ENCODE measurements at regions of chr10 and their contacts with region 1.

Region 1: DNA sequence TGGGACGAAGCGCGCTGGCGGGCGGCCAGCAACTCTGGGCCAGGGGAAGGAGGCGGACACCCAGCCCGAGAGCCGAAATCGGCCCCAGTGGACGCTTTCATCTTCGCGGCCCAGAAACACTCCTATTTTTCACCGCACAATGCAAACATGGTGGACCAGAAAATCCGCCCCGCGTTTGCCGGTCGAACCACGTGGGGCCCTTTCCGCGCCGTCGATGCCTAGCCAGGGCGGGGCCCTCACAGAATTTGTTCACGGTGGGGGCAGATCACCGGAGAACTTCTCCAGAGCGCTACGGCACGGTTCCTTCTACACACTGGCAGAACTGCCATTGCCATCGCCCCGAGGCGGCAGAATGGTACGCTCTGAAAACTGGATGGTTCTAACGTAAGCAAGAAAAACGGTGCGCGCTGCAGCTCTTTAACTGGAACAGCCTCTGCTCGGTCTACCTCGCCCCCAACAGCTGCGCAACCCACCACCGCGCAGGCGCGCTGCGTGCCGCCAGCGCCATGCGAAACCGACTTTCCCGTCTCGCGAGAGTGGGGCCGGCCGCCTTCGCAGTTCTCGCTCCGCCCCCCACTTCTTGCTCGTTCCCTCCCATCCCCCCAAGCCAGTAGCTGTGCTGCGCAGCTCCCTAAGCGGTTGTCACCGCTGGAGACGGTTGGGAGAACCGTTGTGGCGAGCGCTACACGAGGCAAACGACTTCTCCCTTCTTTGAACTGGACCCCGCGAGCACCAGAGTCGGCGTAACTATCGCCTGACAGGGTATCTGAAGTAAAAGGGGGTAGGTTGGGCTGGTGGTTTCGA is at the start of gene HNRNPH3:
- DNase-seq: peak; percentile 99
- H3K4me3 Mint-ChIP-seq: peak within 1 kb of the TSS; percentile 100
- H3K27ac Mint-ChIP-seq: peak within 1 kb of the TSS; percentile 100
- H3K4me1 Mint-ChIP-seq: peaks cover 45% of the 10 kb centered on the region
- H3K27me3 Mint-ChIP-seq: no peaks in the 10 kb centered on the region
- total RNA-seq, gene HNRNPH3: 122 to 123 TPM

Region 2: DNA sequence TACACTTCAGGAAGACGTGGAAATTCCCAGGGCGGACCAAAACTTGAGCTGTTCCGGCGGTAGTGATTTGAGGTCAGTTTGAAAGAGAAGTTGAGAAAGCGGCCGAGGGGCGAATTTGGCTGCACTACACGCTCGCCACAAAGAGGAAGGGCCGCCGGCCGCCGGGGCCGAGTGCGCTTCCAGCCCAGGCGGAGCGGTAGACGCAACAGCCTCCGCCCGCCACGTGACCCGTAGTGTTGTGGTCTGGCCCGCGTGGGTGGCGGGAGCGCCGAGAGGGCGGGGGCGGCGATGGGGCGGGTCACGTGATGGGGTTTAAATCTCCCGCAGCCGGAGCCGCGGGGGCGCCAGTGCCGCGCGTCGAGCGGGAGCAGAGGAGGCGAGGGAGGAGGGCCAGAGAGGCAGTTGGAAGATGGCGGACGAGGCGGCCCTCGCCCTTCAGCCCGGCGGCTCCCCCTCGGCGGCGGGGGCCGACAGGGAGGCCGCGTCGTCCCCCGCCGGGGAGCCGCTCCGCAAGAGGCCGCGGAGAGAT is 447.3 kb before region 1 on chr10 and contains the start of gene SIRT1:
- CTCF ChIA-PET with region 1: no interaction called
- POLR2A ChIA-PET with region 1: interaction called, 55 read pairs
- DNase-seq: peak; percentile 94
- H3K4me3 Mint-ChIP-seq: peak within 1 kb of the TSS; percentile 94
- H3K27ac Mint-ChIP-seq: peak within 1 kb of the TSS; percentile 95
- H3K4me1 Mint-ChIP-seq: peaks cover 36% of the 10 kb centered on the region
- H3K27me3 Mint-ChIP-seq: no peaks in the 10 kb centered on the region
- total RNA-seq, gene SIRT1: 25.8 to 28.5 TPM

Region 3: DNA sequence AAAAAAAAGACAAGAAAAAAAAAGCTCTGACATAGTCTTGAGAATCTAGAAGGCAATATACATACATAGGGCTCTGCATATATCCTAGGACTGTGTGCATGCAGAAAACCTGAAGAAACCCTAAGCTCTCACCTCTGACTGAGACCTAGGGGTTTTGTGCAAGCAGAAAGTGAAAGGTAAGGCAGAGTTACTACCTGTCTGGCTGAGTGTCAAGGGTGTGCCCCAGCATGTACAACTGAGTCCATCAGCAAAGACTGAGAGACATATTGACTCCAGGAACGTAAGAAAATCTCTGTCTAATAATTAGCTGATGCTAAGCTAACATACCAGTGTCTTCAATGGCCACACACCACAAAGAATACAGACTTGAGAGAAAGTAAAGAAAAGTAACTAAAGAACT is 16.1 kb before region 1 on chr10:
- CTCF ChIA-PET with region 1: interaction called, 3 read pairs
- POLR2A ChIA-PET with region 1: interaction called, 27 read pairs
- DNase-seq: no peak
- H3K4me3 Mint-ChIP-seq: no peak overlapping the region
- H3K27ac Mint-ChIP-seq: no peak overlapping the region
- H3K4me1 Mint-ChIP-seq: peaks cover 6% of the 10 kb centered on the region
- H3K27me3 Mint-ChIP-seq: no peaks in the 10 kb centered on the region

Region 4: DNA sequence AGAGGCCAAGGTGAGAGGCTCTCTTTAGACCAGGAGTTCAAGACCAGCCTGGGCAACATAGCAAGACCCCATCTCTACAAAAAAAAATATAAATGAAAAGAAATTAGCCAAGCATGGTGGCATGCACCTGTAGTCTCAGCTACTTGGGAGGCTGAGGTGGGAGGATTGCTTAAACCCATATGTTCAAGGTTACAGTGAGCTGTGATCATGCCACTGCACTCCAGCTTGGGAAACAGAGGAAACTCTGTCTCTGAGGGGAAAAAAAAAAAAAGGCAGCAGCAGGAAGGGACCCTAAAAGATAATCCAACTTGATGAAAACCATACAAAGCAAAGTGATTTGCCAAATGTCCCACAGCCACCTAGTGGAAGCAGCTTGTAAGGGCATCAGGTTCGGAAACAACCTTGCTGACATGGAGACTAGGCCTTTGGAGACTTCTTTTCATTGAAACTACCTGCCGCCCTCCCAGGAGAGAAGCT is 16.6 kb after region 1 on chr10:
- CTCF ChIA-PET with region 1: interaction called, 34 read pairs
- POLR2A ChIA-PET with region 1: interaction called, 13 read pairs
- DNase-seq: peak; percentile 51
- H3K4me3 Mint-ChIP-seq: no peak overlapping the region
- H3K27ac Mint-ChIP-seq: no peak overlapping the region
- H3K4me1 Mint-ChIP-seq: peaks cover 17% of the 10 kb centered on the region
- H3K27me3 Mint-ChIP-seq: no peaks in the 10 kb centered on the region

Region 5: DNA sequence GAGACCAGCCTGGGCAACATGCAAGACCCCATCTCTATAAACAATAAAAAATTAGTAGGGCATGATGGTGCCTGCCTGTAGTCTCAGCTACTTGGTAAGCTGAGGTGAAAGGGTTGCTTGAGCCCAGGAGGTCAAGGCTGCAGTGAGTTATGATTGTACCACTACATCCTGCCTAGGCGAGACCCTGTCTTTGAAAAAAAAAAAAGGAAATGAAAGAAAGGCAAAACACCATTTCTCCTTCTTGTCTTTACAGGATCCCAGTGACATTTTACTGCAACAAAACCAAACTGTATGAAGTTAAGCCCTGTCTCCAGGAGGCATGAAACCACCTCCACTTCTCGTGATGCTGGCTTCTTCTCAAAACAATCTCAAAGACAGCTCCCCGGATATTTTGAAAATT is 30.9 kb after region 1 on chr10:
- CTCF ChIA-PET with region 1: no interaction called
- POLR2A ChIA-PET with region 1: no interaction called
- DNase-seq: no peak
- H3K4me3 Mint-ChIP-seq: no peak overlapping the region
- H3K27ac Mint-ChIP-seq: no peak overlapping the region
- H3K4me1 Mint-ChIP-seq: peaks cover 7% of the 10 kb centered on the region
- H3K27me3 Mint-ChIP-seq: no peaks in the 10 kb centered on the region

Region 6: DNA sequence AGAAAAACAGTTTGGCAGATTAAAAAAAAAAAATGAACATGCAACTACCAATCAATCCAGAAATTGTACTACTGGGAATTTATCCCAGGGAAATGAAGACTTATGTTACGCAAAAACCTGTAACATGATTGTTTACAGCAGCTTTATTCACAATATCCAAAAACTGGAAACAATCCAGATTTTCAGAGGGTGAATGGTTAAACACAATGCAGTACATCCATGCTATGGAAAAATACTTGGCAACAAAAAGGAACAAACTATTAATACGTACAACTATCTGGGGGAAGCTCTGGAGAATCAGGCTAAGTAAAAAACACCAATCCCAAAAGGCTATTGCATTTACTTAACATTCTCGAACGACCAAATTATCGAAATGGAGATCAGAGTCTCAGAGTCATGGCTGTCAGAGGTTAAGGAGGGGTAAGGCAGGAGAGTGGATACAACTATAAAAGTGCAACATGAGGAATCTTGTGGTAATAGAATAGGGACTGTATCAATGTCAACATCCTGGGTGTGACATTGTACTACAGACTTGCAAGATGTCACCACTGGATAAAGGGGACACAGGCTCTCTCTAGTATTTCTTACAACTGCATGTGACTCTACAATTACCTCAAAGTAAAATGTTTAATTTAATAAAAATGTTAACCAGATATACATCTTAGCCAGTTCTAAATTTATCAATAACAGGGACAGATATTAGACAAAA is 96.9 kb after region 1 on chr10:
- CTCF ChIA-PET with region 1: no interaction called
- POLR2A ChIA-PET with region 1: no interaction called
- DNase-seq: no peak
- H3K4me3 Mint-ChIP-seq: no peak overlapping the region
- H3K27ac Mint-ChIP-seq: no peak overlapping the region
- H3K4me1 Mint-ChIP-seq: peaks cover 10% of the 10 kb centered on the region
- H3K27me3 Mint-ChIP-seq: no peaks in the 10 kb centered on the region

Region 7: DNA sequence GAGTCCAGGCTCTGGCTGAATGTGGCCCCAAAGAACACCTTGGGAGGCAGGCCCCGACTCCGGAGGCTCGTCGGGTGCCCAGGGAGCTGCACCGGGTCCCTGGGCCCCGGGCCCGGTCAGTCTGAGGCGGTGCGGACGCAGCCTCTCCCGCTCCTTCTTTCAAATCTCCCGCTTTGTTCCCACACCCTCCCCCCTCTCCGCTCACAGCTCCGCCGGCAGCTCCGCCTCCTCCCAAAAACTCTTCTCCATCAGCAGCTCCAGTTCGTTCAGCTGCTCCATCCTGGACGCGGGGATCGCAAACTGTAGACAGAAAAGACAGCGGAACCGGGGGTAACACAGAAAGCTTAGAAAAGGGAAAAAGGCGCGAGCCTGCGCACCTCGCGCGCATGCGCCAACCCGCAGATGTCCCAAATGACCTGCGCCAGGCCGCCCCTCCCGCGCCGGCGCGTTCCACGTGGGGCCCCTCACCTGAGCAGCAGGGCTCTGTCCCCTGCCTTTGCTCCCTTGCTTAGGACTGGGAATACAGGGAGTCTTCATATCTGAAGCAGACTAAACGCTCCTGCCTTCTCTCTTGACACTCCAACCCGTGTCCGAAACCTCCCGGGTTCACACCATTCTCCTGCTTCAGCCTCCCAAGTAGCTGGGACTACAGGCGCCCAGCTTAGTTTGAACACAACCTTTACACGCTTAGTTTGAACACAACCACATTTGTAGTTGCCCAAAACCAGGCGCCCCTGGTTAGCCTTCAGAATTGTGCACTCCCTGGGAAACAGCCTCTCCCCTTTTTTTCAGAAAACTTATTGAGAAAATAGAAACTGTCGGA is 140.1 kb after region 1 on chr10 and contains the start of gene DNA2:
- CTCF ChIA-PET with region 1: no interaction called
- POLR2A ChIA-PET with region 1: interaction called, 15 read pairs
- DNase-seq: peak; percentile 81
- H3K4me3 Mint-ChIP-seq: peak within 1 kb of the TSS; percentile 93
- H3K27ac Mint-ChIP-seq: peak within 1 kb of the TSS; percentile 91
- H3K4me1 Mint-ChIP-seq: peaks cover 28% of the 10 kb centered on the region
- H3K27me3 Mint-ChIP-seq: no peaks in the 10 kb centered on the region
- total RNA-seq, gene DNA2: 34.7 to 40.4 TPM